PC-9 (cell line): ENCODE measurements at regions of chr7 and their contacts with region 1.

Region 1: DNA sequence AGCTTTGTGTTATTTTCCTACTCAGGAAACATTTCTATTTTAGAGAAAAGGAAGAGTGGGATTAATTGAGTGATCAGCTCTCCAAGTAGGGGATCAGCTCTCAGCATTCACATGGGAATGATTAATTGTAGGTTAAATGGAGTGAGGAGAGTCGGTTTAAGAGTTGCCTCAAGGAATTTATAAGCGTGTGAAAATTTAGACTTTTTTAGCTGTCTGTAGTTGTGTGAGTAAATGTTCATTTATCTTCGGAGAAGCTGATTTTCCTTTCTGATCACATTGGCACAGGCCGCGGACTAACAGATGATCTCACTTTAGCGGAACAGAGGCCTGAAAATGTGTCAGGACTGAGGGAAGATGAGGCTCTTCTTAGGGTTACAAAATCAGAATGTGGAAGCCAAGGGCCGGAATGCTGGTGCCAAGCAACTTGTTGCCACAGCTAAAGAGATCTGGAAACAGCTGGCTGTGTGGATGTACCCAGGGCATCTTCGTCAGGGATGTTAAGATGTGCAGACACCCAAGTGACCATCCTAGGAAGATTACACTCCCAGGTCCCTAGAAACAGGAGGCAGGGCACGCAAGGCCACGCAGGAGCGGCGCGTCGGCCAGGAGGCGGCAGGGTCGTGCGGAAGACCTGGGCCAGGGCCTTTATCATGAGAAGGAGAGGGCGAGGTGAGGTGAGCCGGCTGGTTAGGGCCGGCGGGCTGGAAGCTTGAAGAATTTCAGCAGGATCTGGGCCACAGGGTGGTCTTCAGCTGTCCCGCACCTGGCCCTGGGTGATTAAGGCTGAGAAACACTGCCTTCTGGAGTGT is 35.1 kb upstream of the TTYH3 start:
- DNase-seq: no peak
- H3K4me3 ChIP-seq: no peak overlapping the region
- H3K27ac ChIP-seq: no peak overlapping the region
- H3K4me1 ChIP-seq: no peaks in the 10 kb centered on the region
- H3K27me3 ChIP-seq: no peaks in the 10 kb centered on the region
- CTCF ChIP-seq: no peak

Region 2: DNA sequence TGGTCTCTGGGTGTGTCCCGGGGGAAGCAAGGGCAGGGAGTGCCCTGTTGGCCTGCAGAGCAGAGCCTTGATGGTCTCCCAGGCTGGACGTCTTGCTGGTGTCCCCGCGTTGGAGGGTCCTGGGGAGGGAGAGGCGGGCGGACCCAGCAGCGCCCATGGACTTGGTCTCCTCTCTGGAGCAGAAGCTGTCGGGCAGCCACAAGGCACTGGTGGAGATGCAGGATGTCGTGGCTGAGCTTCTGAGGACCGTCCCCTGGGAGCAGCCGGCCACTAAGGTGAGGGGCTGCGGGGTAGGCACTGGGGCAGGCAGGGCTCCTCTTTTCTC is 56.0 kb after region 1 on chr7:
- CTCF ChIA-PET with region 1: interaction called, 22 read pairs
- POLR2A ChIA-PET with region 1: no interaction called
- intact Hi-C with region 1: no loop called
- DNase-seq: no peak
- H3K4me3 ChIP-seq: no peak overlapping the region
- H3K27ac ChIP-seq: no peak overlapping the region
- H3K4me1 ChIP-seq: no peaks in the 10 kb centered on the region
- H3K27me3 ChIP-seq: no peaks in the 10 kb centered on the region
- CTCF ChIP-seq: no peak